Endothelial cell of umbilical vein (primary cell): ENCODE measurements at regions of chr9 and their contacts with region 1.

Region 1: DNA sequence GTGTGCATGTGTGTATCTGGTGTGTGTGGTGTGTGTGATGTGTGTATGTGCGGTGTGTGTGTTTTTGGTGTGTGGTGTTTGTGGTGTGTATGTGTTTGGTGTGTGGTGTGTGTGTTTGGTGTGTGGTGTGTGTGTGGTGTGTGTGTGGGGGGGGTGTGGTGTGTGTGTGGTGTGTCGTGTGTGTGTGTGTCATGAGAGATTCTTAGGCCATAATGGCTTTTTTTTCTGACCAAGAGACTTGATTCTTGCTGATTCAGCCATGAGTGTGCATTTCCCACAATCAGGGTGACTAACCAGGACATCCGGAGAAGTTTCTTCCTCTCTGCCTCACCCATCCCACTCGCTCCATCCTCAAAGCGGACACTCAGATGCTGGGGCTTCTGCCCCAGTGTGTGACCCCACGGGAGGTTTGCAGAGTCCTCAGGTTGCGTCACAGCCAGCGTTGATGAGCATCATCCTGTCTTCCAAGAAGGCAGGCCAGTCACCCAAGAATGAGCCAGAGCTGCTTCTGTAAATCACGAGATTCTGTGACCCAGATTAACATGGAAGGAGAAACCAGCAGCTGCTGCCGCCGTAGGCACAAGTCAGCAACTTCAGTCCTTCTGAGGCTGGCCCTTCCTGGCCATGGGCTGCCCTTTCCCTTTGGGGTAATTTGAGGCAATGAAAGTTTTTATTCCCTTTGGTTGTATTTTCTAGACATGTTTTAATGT is 12.5 kb upstream of the CTSL start:
- DNase-seq: peak; percentile 88
- H3K4me3 ChIP-seq: peak overlapping the region in 1 of 3 experiments; percentile 20
- H3K27ac ChIP-seq: peak overlapping the region; percentile 93
- H3K4me1 ChIP-seq: peaks cover 29% of the 10 kb centered on the region
- H3K27me3 ChIP-seq: no peaks in the 10 kb centered on the region
- CTCF ChIP-seq: no peak
- POLR2A ChIP-seq: peak; percentile 46

Region 2: DNA sequence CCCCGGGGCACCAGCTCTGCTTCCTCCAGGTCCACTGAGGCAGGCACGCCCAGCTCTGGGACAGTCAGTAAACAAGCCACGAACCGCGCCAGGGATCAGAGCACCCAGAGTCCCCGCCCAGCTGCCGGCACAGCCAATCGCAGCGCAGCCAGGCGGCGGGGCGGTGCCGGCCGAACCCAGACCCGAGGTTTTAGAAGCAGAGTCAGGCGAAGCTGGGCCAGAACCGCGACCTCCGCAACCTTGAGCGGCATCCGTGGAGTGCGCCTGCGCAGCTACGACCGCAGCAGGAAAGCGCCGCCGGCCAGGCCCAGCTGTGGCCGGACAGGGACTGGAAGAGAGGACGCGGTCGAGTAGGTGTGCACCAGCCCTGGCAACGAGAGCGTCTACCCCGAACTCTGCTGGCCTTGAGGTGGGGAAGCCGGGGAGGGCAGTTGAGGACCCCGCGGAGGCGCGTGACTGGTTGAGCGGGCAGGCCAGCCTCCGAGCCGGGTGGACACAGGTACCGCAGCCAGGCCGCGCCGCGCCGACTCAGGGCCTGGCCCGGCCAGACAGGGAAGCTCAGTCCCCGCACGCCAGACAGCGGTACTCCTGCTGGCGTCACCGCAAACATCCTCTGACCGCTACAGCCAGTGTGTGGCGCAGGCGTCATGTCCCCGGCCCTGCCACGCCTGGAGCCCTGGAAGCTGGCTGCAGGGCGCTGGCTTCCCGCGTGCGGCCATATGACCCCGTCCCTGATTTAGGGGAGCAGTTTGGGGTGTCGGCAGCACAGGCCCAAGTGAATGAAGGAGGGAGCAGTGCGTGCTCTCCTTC is 12.7 kb after region 1 on chr9 and contains the start of gene CTSL:
- CTCF ChIA-PET with region 1: interaction called, 24 read pairs
- POLR2A ChIA-PET with region 1: interaction called, 15 read pairs
- dilution Hi-C with region 1: no loop called
- intact Hi-C with region 1: loop called (anchors 1 kb)
- DNase-seq: peak; percentile 80
- H3K4me3 ChIP-seq: peak within 1 kb of the TSS; percentile 24 to 79 (median 57)
- H3K27ac ChIP-seq: peak within 1 kb of the TSS; percentile 57
- H3K4me1 ChIP-seq: no peaks in the 10 kb centered on the region
- H3K27me3 ChIP-seq: no peaks in the 10 kb centered on the region
- CTCF ChIP-seq: peak in 1 of 2 donors; percentile 35
- POLR2A ChIP-seq: peak; percentile 92
- total RNA-seq, gene CTSL: 105 and 107 TPM in 2 replicates